Right lobe of liver (tissue), 6 donors: ENCODE measurements at regions of chr9 and their contacts with region 1.

Region 1: GRCh38 chr9:37913480-37914153 is 9.7 kb upstream of the SLC25A51 start:
- DNase-seq: peak; percentile 64 to 81 (median 77)
- ATAC-seq: peak; percentile 85 to 95 (median 90)
- H3K4me3 ChIP-seq: no peak overlapping the region
- H3K27ac ChIP-seq: no peak overlapping the region
- H3K4me1 ChIP-seq: peaks cover 0 to 14% (median 0%) of the 10 kb centered on the region in 4 donors
- H3K27me3 ChIP-seq: no peaks in the 10 kb centered on the region
- CTCF ChIP-seq: peak; percentile 97 to 99 (median 98)
- POLR2A ChIP-seq: no peak

Region 2: DNA sequence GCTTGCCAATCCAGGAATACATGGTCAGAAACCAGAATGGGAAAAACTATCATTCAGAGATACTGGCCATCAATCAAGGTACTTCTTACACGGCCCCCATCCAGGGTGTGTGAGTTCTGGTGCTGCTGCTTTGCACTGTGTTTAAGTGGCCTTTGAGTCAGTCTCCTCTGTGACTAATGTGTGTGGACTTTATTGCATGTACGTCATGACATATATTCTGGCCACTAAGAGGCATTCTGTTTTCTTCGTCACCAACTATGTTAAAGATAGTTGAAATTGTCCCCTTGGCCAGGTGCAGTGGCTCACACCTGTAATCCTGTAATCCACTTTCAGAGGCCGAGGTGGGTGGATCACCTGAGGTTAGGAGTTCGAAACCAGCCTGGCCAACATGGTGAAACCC is 137.3 kb before region 1 on chr9:
- intact Hi-C with region 1: no loop called
- DNase-seq: no peak
- ATAC-seq: no peak
- H3K4me3 ChIP-seq: no peak overlapping the region
- H3K27ac ChIP-seq: no peak overlapping the region
- H3K4me1 ChIP-seq: no peaks in the 10 kb centered on the region
- H3K27me3 ChIP-seq: no peaks in the 10 kb centered on the region
- CTCF ChIP-seq: no peak
- POLR2A ChIP-seq: no peak

Region 3: DNA sequence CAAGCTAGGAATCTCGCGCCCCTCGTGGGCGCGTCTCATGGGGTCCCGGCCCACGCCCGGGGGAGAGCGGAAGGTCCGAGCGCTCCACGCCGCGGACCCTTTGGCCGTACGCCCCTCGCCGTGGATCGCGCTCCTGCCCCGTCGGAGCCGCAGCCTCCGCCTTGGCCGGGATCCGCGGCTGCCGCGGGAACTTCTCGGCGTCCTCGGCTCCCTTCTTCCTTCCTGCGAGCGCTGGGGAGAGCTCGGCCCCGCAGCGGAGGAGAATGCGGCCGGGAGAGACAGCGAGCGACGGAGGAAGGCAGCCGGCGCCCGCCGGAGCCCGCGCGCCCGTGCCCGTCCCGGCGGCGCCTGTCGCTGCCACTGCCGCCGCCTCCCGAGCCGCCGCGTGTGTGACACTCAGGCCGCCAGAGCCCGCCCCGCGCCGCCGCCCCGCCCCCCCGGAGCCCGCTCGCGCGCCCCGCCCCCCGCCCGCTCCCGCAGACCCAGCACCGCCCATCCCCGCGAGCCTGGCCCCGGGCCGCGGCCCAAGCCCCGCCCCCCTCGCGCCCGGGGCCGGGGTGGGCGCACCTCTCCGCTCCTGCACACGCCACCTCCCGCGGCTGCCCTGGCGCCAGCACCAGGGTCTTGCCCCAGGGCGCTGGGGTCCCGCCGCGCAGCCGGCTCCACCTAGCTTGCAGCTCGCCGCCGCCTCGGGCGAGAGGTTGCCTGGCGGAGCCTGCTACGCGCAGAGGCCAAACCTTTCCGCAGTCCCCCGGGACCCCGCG is 155.4 kb after region 1 on chr9 and contains the start of gene SHB:
- intact Hi-C with region 1: loop called (anchors 10 kb)
- DNase-seq: peak; percentile 88 to 90 (median 90)
- ATAC-seq: peak; percentile 55 to 78 (median 72)
- H3K4me3 ChIP-seq: peak within 1 kb of the TSS; percentile 99
- H3K27ac ChIP-seq: peak within 1 kb of the TSS; percentile 84 to 98 (median 93)
- H3K4me1 ChIP-seq: peaks cover 0 to 25% (median 5%) of the 10 kb centered on the region in 4 donors
- H3K27me3 ChIP-seq: no peaks in the 10 kb centered on the region
- CTCF ChIP-seq: peak in 3 of 4 donors; percentile 24 to 40 (median 24)
- POLR2A ChIP-seq: peak; percentile 98
- total RNA-seq, gene SHB: 12.0 to 43.1 (median 21.9) TPM